ENCODE measurements at regions of chr19 and their contacts with region 1.

Region 1: GRCh38 chr19:42108527-42109389 is 23.5 kb downstream of the POU2F2 start:
- DNase-seq: peak; percentile 88

Region 2: GRCh38 chr19:42184401-42184861 is 75.7 kb after region 1 on chr19:
- intact Hi-C with region 1: loop called (anchors 2 kb)
- DNase-seq: no peak